PC-9 (cell line): ENCODE measurements at regions of chr1 and their contacts with region 1.

Region 1: GRCh38 chr1:202915146-202915545 is 11.9 kb downstream of the KLHL12 start:
- DNase-seq: no peak
- H3K4me3 ChIP-seq: no peak overlapping the region
- H3K27ac ChIP-seq: no peak overlapping the region
- H3K4me1 ChIP-seq: no peaks in the 10 kb centered on the region
- H3K27me3 ChIP-seq: no peaks in the 10 kb centered on the region
- CTCF ChIP-seq: no peak

Region 2: GRCh38 chr1:202551683-202552082 is 363.5 kb before region 1 on chr1:
- CTCF ChIA-PET with region 1: no interaction called
- POLR2A ChIA-PET with region 1: no interaction called
- intact Hi-C with region 1: no loop called
- DNase-seq: peak in 1 of 2 experiments; percentile 25
- H3K4me3 ChIP-seq: no peak overlapping the region
- H3K27ac ChIP-seq: no peak overlapping the region
- H3K4me1 ChIP-seq: 0 out of 2 replicates have a peak, but pooled peaks cover 6% of the 10 kb centered on the region
- H3K27me3 ChIP-seq: no peaks in the 10 kb centered on the region
- CTCF ChIP-seq: no peak

Region 3: GRCh38 chr1:202733251-202733650 is 181.9 kb before region 1 on chr1:
- CTCF ChIA-PET with region 1: no interaction called
- POLR2A ChIA-PET with region 1: no interaction called
- intact Hi-C with region 1: loop called (anchors 10 kb)
- DNase-seq: no peak
- H3K4me3 ChIP-seq: no peak overlapping the region
- H3K27ac ChIP-seq: no peak overlapping the region
- H3K4me1 ChIP-seq: no peaks in the 10 kb centered on the region
- H3K27me3 ChIP-seq: no peaks in the 10 kb centered on the region
- CTCF ChIP-seq: no peak